ENCODE measurements at regions of chr7 and their contacts with region 1.

Region 1: GRCh38 chr7:23273141-23273599 is 26.0 kb upstream of the MALSU1 start:
- DNase-seq: peak; percentile 96 to 97
- H3K4me3 ChIP-seq: peak overlapping the region; percentile 15; the same call in 1 of the 2 replicates
- H3K4me3 Mint-ChIP-seq: peak overlapping the region; percentile 68
- H3K27ac Mint-ChIP-seq: peak overlapping the region; percentile 74
- H3K4me1 ChIP-seq: peaks cover 5% of the 10 kb centered on the region
- H3K4me1 Mint-ChIP-seq: peaks cover 9% of the 10 kb centered on the region
- H3K27me3 ChIP-seq: no peaks in the 10 kb centered on the region
- H3K27me3 Mint-ChIP-seq: no peaks in the 10 kb centered on the region
- CTCF ChIP-seq: peak; percentile 93 to 95

Region 2: GRCh38 chr7:23168111-23168885 is 104.9 kb before region 1 on chr7:
- CTCF ChIA-PET with region 1: no interaction called
- POLR2A ChIA-PET with region 1: no interaction called
- intact Hi-C with region 1: no loop called
- DNase-seq: no peak
- H3K4me3 ChIP-seq: no peak overlapping the region
- H3K4me3 Mint-ChIP-seq: no peak overlapping the region
- H3K27ac Mint-ChIP-seq: no peak overlapping the region
- H3K4me1 ChIP-seq: no peaks in the 10 kb centered on the region
- H3K4me1 Mint-ChIP-seq: no peaks in the 10 kb centered on the region
- H3K27me3 ChIP-seq: no peaks in the 10 kb centered on the region
- H3K27me3 Mint-ChIP-seq: no peaks in the 10 kb centered on the region
- CTCF ChIP-seq: no peak

Region 3: DNA sequence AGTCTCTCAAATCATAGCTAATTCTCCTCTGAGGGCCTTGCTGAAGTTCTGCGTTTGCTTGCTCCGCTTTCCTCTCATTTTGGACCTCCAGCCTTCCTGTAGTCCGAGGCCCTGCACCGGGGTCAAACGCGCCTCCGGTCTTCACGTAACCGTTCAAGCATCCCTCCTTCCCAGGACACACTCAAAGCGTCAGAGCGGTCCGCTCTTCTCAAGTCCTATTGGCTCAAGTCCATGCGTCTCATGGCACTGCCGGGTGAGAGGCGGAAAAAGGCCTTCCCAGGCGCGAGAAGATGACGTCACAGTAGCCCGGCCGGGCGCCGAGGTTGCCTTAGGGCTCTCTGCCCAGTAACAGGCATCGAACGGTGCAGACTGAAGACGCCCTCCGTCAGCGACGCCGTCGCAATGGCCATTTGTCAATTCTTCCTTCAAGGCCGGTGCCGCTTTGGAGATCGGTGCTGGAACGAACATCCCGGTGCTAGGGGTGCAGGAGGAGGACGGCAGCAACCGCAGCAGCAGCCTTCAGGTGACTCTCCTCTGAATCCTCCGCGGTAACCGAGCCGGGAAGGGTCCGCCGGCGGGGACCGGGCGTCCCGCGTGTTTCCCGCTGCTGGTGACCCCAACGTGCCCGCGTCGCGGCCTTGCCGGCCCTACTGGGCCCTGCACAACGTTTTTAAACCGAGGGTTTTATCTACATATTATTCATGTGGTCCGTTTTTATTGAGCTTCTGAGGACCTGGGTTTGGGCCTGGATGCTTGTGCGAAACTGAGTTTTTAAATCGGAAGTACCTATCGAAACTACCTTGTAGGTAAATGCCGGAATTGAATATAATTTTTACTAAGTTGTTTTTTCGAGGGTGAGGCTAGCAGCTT is 91.3 kb before region 1 on chr7 and contains the start of gene NUP42:
- CTCF ChIA-PET with region 1: interaction called, 9 read pairs
- POLR2A ChIA-PET with region 1: no interaction called
- intact Hi-C with region 1: loop called (anchors 1 kb)
- DNase-seq: peak; percentile 98 to 99
- H3K4me3 ChIP-seq: peak within 1 kb of the TSS; percentile 86
- H3K4me3 Mint-ChIP-seq: peak within 1 kb of the TSS; percentile 87
- H3K27ac Mint-ChIP-seq: peak within 1 kb of the TSS; percentile 95
- H3K4me1 ChIP-seq: 0 out of 2 replicates have a peak, but pooled peaks cover 14% of the 10 kb centered on the region
- H3K4me1 Mint-ChIP-seq: no peaks in the 10 kb centered on the region
- H3K27me3 ChIP-seq: no peaks in the 10 kb centered on the region; the same call in 1 of the 2 replicates
- H3K27me3 Mint-ChIP-seq: no peaks in the 10 kb centered on the region
- CTCF ChIP-seq: no peak
- total RNA-seq, gene NUP42: 38.6 and 41.6 TPM in 2 replicates

Region 4: GRCh38 chr7:23298885-23299769 is 26.0 kb after region 1 on chr7 and contains the start of gene MALSU1:
- CTCF ChIA-PET with region 1: interaction called, 17 read pairs
- POLR2A ChIA-PET with region 1: interaction called, 5 read pairs
- intact Hi-C with region 1: loop called (anchors 1 kb)
- DNase-seq: peak; percentile 96
- H3K4me3 ChIP-seq: peak within 1 kb of the TSS; percentile 84
- H3K4me3 Mint-ChIP-seq: peak within 1 kb of the TSS; percentile 95
- H3K27ac Mint-ChIP-seq: peak within 1 kb of the TSS; percentile 87
- H3K4me1 ChIP-seq: peaks cover 5% of the 10 kb centered on the region; the same call in 1 of the 2 replicates
- H3K4me1 Mint-ChIP-seq: peaks cover 25% of the 10 kb centered on the region
- H3K27me3 ChIP-seq: no peaks in the 10 kb centered on the region
- H3K27me3 Mint-ChIP-seq: no peaks in the 10 kb centered on the region
- CTCF ChIP-seq: no peak
- total RNA-seq, gene MALSU1: 95.5 and 98.0 TPM in 2 replicates

Region 5: DNA sequence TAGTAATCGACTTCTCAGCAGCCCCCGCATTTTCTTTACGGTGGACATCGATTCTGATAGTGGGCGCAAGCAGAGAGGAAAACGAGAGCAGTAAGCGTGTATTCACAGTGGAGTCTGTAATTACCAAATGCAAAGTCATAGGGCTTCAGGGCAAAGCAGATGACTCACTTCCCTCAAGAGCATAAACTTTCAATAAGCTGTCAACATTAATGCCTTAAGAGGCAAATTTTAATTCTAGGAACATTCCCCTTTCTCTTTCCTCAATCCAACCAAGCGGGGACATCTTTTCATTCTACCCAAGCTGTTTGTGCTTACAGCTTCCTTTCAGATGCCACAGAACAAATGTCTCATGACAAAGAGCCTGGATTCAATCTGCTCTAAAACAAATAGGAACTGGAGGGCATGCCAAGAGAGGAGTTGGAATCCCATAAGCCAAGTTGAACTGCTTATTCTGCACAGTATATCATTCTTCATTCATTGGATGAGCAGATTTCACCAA is 74.6 kb after region 1 on chr7:
- CTCF ChIA-PET with region 1: no interaction called
- POLR2A ChIA-PET with region 1: no interaction called
- intact Hi-C with region 1: no loop called
- DNase-seq: no peak
- H3K4me3 ChIP-seq: no peak overlapping the region
- H3K4me3 Mint-ChIP-seq: no peak overlapping the region
- H3K27ac Mint-ChIP-seq: no peak overlapping the region
- H3K4me1 ChIP-seq: no peaks in the 10 kb centered on the region
- H3K4me1 Mint-ChIP-seq: peaks cover 7% of the 10 kb centered on the region
- H3K27me3 ChIP-seq: no peaks in the 10 kb centered on the region
- H3K27me3 Mint-ChIP-seq: no peaks in the 10 kb centered on the region
- CTCF ChIP-seq: no peak

Region 6: GRCh38 chr7:23462846-23463245 is 189.7 kb after region 1 on chr7:
- CTCF ChIA-PET with region 1: interaction called, 11 read pairs
- POLR2A ChIA-PET with region 1: no interaction called
- intact Hi-C with region 1: no loop called
- DNase-seq: peak in 1 of 2 experiments; percentile 35
- H3K4me3 ChIP-seq: no peak overlapping the region
- H3K4me3 Mint-ChIP-seq: peak overlapping the region; percentile 72
- H3K27ac Mint-ChIP-seq: peak overlapping the region; percentile 12
- H3K4me1 ChIP-seq: peaks cover 44% of the 10 kb centered on the region
- H3K4me1 Mint-ChIP-seq: peaks cover 37% of the 10 kb centered on the region
- H3K27me3 ChIP-seq: no peaks in the 10 kb centered on the region
- H3K27me3 Mint-ChIP-seq: no peaks in the 10 kb centered on the region
- CTCF ChIP-seq: no peak

Region 7: GRCh38 chr7:23712368-23713284 is 439.5 kb after region 1 on chr7:
- CTCF ChIA-PET with region 1: interaction called, 10 read pairs
- POLR2A ChIA-PET with region 1: no interaction called
- intact Hi-C with region 1: loop called (anchors 10 kb)
- DNase-seq: peak in 1 of 2 experiments; percentile 52
- H3K4me3 ChIP-seq: no peak overlapping the region
- H3K4me3 Mint-ChIP-seq: no peak overlapping the region
- H3K27ac Mint-ChIP-seq: no peak overlapping the region
- H3K4me1 ChIP-seq: peaks cover 9% of the 10 kb centered on the region; the same call in 1 of the 2 replicates
- H3K4me1 Mint-ChIP-seq: peaks cover 14% of the 10 kb centered on the region
- H3K27me3 ChIP-seq: no peaks in the 10 kb centered on the region
- H3K27me3 Mint-ChIP-seq: no peaks in the 10 kb centered on the region
- CTCF ChIP-seq: peak; percentile 53 to 57

Measured in Caco-2 (cell line).